SK-N-SH (cell line): ENCODE measurements at regions of chr11 and their contacts with region 1.

Region 1: GRCh38 chr11:125091247-125091876 is 20.1 kb downstream of the TMEM218 start:
- DNase-seq: peak; percentile 90
- H3K4me3 ChIP-seq: no peak overlapping the region; a peak in 1 of 4 replicates
- H3K27ac ChIP-seq: peak overlapping the region in 1 of 2 experiments; percentile 17; a peak in 1 of 4 replicates
- H3K4me1 ChIP-seq: peaks cover 4% of the 10 kb centered on the region in 2 experiments; a peak in 2 of 4 replicates
- H3K27me3 ChIP-seq: no peaks in the 10 kb centered on the region
- CTCF ChIP-seq: peak; percentile 79
- EP300 ChIP-seq: no peak
- RAD21 ChIP-seq: peak; percentile 96

Region 2: GRCh38 chr11:125070699-125071254 is 20.6 kb before region 1 on chr11:
- CTCF ChIA-PET with region 1: interaction called, 22 read pairs
- POLR2A ChIA-PET with region 1: no interaction called
- DNase-seq: no peak
- H3K4me3 ChIP-seq: no peak overlapping the region
- H3K27ac ChIP-seq: no peak overlapping the region
- H3K4me1 ChIP-seq: no peaks in the 10 kb centered on the region; a peak in 1 of 4 replicates
- H3K27me3 ChIP-seq: no peaks in the 10 kb centered on the region
- CTCF ChIP-seq: no peak
- EP300 ChIP-seq: no peak
- RAD21 ChIP-seq: no peak

Region 3: GRCh38 chr11:125102510-125102909 is 11.1 kb after region 1 on chr11:
- CTCF ChIA-PET with region 1: interaction called, 14 read pairs
- POLR2A ChIA-PET with region 1: no interaction called
- DNase-seq: no peak
- H3K4me3 ChIP-seq: no peak overlapping the region
- H3K27ac ChIP-seq: no peak overlapping the region
- H3K4me1 ChIP-seq: no peaks in the 10 kb centered on the region
- H3K27me3 ChIP-seq: no peaks in the 10 kb centered on the region
- CTCF ChIP-seq: no peak
- EP300 ChIP-seq: no peak
- RAD21 ChIP-seq: no peak

Region 4: GRCh38 chr11:125123947-125124617 is 32.7 kb after region 1 on chr11:
- CTCF ChIA-PET with region 1: interaction called, 10 read pairs
- POLR2A ChIA-PET with region 1: no interaction called
- DNase-seq: peak; percentile 42
- H3K4me3 ChIP-seq: no peak overlapping the region
- H3K27ac ChIP-seq: no peak overlapping the region
- H3K4me1 ChIP-seq: no peaks in the 10 kb centered on the region
- H3K27me3 ChIP-seq: no peaks in the 10 kb centered on the region
- CTCF ChIP-seq: peak; percentile 48
- EP300 ChIP-seq: no peak
- RAD21 ChIP-seq: 0 out of 2 replicates have a peak, but pooled peaks have one; percentile 8

Region 5: DNA sequence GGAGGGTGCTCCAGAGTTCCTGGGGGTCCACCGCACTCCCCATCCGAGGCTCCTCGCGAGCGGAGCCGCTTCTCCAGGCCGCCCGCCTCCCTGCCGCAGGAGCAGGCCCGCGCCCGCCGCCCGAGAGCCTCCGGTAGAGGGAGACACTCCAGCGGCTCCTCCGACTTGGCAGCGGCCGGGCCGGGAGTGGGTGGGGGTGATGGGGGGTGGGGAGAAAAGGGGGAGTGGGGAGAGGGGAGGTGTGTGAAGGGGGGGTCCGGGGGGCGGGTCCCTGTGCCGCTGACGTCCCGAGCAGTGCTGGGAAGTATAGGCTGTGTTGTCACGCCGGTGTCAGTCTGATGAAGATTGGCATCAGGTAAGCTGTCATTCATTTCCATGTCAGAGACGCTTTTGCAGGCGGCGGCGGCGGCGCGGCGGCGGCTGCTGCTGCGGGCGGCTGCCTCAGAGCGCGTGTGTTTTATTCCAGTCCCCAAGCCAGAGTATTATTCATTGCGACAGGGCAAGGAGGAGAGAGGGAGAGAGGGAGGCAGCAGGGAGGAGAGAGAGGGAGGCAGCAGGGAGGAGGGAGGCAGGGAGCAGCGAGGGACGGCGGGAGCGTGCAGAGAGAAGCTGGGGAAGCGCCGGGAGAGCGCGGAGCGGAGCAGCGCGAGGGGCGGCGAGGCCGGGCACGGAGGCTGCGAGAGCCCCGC is 73.2 kb after region 1 on chr11 and contains the start of gene PKNOX2:
- CTCF ChIA-PET with region 1: interaction called, 10 read pairs
- POLR2A ChIA-PET with region 1: no interaction called
- DNase-seq: peak; percentile 95
- H3K4me3 ChIP-seq: peak within 1 kb of the TSS; percentile 52 to 71
- H3K27ac ChIP-seq: no peak within 1 kb of the TSS
- H3K4me1 ChIP-seq: peaks cover 0 to 7% of the 10 kb centered on the region in 2 experiments; a peak in 1 of 4 replicates
- H3K27me3 ChIP-seq: peaks cover 6% of the 10 kb centered on the region
- CTCF ChIP-seq: peak; percentile 56
- EP300 ChIP-seq: no peak
- RAD21 ChIP-seq: peak; percentile 50
- polyA plus RNA-seq, gene PKNOX2: 0.02 TPM in 1 of 2 replicates, not detected in the other

Region 6: GRCh38 chr11:125423247-125423849 is 332.0 kb after region 1 on chr11:
- CTCF ChIA-PET with region 1: interaction called, 49 read pairs
- POLR2A ChIA-PET with region 1: no interaction called
- DNase-seq: no peak
- H3K4me3 ChIP-seq: no peak overlapping the region
- H3K27ac ChIP-seq: no peak overlapping the region
- H3K4me1 ChIP-seq: no peaks in the 10 kb centered on the region
- H3K27me3 ChIP-seq: peaks cover 14% of the 10 kb centered on the region; the same call in 1 of the 2 replicates
- CTCF ChIP-seq: peak; percentile 44
- EP300 ChIP-seq: no peak
- RAD21 ChIP-seq: peak; percentile 25; the same call in 1 of the 2 replicates

Region 7: GRCh38 chr11:125451400-125452124 is 360.2 kb after region 1 on chr11:
- CTCF ChIA-PET with region 1: interaction called, 11 read pairs
- POLR2A ChIA-PET with region 1: no interaction called
- DNase-seq: peak; percentile 80
- H3K4me3 ChIP-seq: no peak overlapping the region
- H3K27ac ChIP-seq: no peak overlapping the region
- H3K4me1 ChIP-seq: peaks cover 9 to 14% of the 10 kb centered on the region in 2 experiments; a peak in 2 of 4 replicates
- H3K27me3 ChIP-seq: no peaks in the 10 kb centered on the region
- CTCF ChIP-seq: no peak
- EP300 ChIP-seq: no peak
- RAD21 ChIP-seq: no peak